SK-MEL-5 (cell line): ENCODE measurements at regions of chr15 and their contacts with region 1.

Region 1: GRCh38 chr15:48940448-48940893 is 23.2 kb downstream of the SHC4 start:
- DNase-seq: peak; percentile 88

Region 2: GRCh38 chr15:48877630-48878595 is 62.6 kb before region 1 on chr15 and contains the start of gene EID1:
- in situ Hi-C with region 1: loop called (anchors 10 kb)
- DNase-seq: peak; percentile 92
- total RNA-seq, gene EID1: 154 and 171 TPM in 2 replicates

Region 3: DNA sequence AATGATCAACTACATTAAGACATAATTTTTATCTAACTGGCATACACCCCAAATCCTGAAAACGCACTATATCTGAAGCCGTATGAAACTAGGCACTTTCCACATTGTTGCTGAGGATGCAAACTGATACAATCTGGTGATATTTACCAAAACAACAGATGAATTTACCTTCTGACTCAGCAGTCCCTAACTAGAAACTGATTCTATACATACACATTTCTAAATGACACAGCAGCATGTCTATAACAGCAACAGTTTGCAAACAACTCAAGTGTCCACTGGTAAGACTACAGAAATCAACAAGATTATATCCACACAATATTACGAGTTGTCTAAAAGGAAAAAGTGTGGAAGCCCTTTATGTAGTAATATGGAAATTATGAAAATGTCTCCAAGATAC is 82.9 kb after region 1 on chr15:
- in situ Hi-C with region 1: no loop called
- DNase-seq: no peak